ENCODE measurements at regions of chr20 and their contacts with region 1.

Region 1: GRCh38 chr20:4813863-4814695 is 92.4 kb downstream of the PRND start:
- DNase-seq: peak; percentile 70
- ATAC-seq: peak; percentile 49
- H3K4me3 Mint-ChIP-seq: peak overlapping the region; percentile 89
- H3K27ac Mint-ChIP-seq: peak overlapping the region; percentile 99
- H3K4me1 Mint-ChIP-seq: peaks cover 98% of the 10 kb centered on the region
- H3K27me3 Mint-ChIP-seq: no peaks in the 10 kb centered on the region
- CTCF ChIP-seq: no peak

Region 2: DNA sequence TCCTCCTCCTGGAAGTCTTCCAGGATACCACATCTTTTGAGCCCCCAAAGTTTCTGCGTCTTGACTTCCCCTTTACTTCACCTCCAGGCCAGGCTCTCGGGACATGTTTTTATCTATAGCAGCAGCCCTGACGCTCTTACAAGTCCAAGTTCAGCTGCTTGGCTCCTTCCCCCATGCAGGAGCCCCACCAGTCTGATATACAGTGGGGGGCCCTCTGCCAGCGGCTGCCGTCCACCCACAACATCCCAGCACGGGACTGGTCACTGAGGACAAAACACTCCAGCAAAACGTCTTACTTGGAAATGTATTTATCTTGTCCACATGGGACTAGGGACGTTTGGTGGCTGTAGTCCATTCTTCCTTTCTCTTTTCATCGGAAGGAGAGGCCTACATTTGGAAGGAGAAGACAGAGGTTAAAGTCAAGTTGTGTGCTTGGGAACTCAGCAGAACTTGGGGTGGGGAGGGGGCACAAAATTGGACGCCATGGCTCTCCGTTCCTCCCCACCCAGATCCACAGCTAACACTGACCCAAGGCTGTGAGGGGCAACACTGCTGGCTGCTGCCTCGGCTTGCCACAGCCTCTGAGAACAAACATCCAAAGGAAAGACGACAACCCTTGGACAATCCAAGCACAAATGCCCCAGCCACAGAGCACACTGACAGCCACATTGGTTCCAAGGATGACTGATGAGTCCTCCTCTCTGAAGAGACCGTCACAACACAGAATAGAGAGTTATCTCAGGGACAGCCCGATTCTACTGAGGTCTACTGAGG is 13.2 kb before region 1 on chr20:
- CTCF ChIA-PET with region 1: interaction called, 5 read pairs
- POLR2A ChIA-PET with region 1: interaction called, 24 read pairs
- intact Hi-C with region 1: loop called (anchors 2 kb)
- DNase-seq: no peak
- ATAC-seq: no peak
- H3K4me3 Mint-ChIP-seq: no peak overlapping the region
- H3K27ac Mint-ChIP-seq: no peak overlapping the region
- H3K4me1 Mint-ChIP-seq: peaks cover 22% of the 10 kb centered on the region
- H3K27me3 Mint-ChIP-seq: no peaks in the 10 kb centered on the region
- CTCF ChIP-seq: no peak

Region 3: GRCh38 chr20:4956200-4956810 is 142.2 kb after region 1 on chr20:
- CTCF ChIA-PET with region 1: interaction called, 18 read pairs
- POLR2A ChIA-PET with region 1: interaction called, 16 read pairs
- intact Hi-C with region 1: no loop called
- DNase-seq: no peak
- ATAC-seq: no peak
- H3K4me3 Mint-ChIP-seq: no peak overlapping the region
- H3K27ac Mint-ChIP-seq: peak overlapping the region; percentile 18
- H3K4me1 Mint-ChIP-seq: peaks cover 34% of the 10 kb centered on the region
- H3K27me3 Mint-ChIP-seq: no peaks in the 10 kb centered on the region
- CTCF ChIP-seq: peak; percentile 19

Region 4: GRCh38 chr20:4985658-4986057 is 171.6 kb after region 1 on chr20:
- CTCF ChIA-PET with region 1: no interaction called
- POLR2A ChIA-PET with region 1: interaction called, 27 read pairs
- intact Hi-C with region 1: loop called (anchors 5 kb)
- DNase-seq: no peak
- ATAC-seq: peak; percentile 59
- H3K4me3 Mint-ChIP-seq: peak overlapping the region; percentile 66
- H3K27ac Mint-ChIP-seq: peak overlapping the region; percentile 92
- H3K4me1 Mint-ChIP-seq: peaks cover 92% of the 10 kb centered on the region
- H3K27me3 Mint-ChIP-seq: no peaks in the 10 kb centered on the region
- CTCF ChIP-seq: no peak

Region 5: GRCh38 chr20:5652626-5653553 is 838.8 kb after region 1 on chr20:
- CTCF ChIA-PET with region 1: no interaction called
- POLR2A ChIA-PET with region 1: no interaction called
- intact Hi-C with region 1: loop called (anchors 2 kb)
- DNase-seq: no peak
- ATAC-seq: peak; percentile 21
- H3K4me3 Mint-ChIP-seq: peak overlapping the region; percentile 64
- H3K27ac Mint-ChIP-seq: peak overlapping the region; percentile 92
- H3K4me1 Mint-ChIP-seq: peaks cover 84% of the 10 kb centered on the region
- H3K27me3 Mint-ChIP-seq: no peaks in the 10 kb centered on the region
- CTCF ChIP-seq: no peak